Psoas muscle (tissue), 8 donors: ENCODE measurements at regions of chr15 and their contacts with region 1.

Region 1: DNA sequence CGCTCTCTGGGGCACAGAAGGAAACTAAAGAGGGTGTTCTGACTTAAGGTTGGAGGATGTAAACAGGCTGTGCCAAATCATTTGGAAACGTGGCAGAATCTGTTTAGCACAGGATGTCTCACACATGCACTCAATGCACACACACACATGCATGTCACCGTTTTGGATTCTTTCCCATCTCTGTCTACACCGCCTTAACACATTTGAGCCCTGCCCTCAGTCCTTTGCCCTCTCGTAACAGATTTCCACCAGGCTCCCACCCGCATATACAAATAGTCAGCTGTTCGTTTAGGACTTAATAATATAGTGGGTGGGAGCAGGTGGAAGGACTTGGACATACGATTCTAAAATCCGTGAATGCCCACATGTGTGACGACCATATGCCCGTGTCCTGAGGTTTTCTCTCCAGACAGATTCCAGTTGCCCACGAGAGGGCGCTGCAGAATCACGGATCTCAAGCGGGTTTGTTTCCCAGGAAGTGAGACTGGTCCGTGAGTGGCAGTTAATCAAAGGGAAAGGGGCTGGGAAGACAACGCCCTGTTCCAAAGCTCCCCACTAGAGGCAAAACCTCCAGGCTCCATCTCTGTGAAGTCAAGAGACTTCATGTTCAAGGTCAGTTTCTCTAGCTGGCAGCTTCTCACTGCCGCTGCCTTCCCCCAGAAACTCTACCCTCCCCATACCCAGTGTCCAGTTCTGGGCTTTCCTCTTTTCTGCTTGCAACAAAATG is 44.5 kb downstream of the NOX5 start:
- DNase-seq: peak; percentile 88 to 93
- ATAC-seq: peak; percentile 80 to 90 (median 82)
- H3K4me3 ChIP-seq: peak overlapping the region; percentile 33
- H3K27ac ChIP-seq: peak overlapping the region; percentile 11
- H3K4me1 ChIP-seq: peaks cover 8% of the 10 kb centered on the region
- H3K27me3 ChIP-seq: peaks cover 0 to 1% (median 0%) of the 10 kb centered on the region in 3 donors
- CTCF ChIP-seq: peak; percentile 85

Region 2: DNA sequence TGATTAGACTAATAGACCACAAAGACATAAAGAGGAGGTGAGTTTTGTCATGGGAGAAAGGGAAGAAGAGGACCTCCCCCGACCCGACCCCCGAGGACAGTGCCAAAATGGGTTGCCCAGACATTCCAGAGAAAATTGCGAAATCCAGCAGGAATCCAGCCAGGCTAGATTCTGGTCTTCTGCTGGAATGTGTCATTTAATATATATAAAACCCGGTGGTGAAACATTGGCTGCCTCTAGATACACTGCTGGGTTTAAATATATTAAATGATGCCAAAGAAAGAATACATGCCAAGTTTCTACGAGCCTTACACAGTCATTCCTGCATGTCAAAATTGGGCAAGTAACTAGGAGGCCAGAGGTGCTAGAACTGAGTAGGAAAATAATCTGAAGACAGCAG is 173.9 kb before region 1 on chr15:
- intact Hi-C with region 1: no loop called
- DNase-seq: no peak
- ATAC-seq: peak in 2 of 4 donors; percentile 52 to 54
- H3K4me3 ChIP-seq: no peak overlapping the region
- H3K27ac ChIP-seq: no peak overlapping the region
- H3K4me1 ChIP-seq: peaks cover 11% of the 10 kb centered on the region
- H3K27me3 ChIP-seq: no peaks in the 10 kb centered on the region
- CTCF ChIP-seq: no peak

Region 3: DNA sequence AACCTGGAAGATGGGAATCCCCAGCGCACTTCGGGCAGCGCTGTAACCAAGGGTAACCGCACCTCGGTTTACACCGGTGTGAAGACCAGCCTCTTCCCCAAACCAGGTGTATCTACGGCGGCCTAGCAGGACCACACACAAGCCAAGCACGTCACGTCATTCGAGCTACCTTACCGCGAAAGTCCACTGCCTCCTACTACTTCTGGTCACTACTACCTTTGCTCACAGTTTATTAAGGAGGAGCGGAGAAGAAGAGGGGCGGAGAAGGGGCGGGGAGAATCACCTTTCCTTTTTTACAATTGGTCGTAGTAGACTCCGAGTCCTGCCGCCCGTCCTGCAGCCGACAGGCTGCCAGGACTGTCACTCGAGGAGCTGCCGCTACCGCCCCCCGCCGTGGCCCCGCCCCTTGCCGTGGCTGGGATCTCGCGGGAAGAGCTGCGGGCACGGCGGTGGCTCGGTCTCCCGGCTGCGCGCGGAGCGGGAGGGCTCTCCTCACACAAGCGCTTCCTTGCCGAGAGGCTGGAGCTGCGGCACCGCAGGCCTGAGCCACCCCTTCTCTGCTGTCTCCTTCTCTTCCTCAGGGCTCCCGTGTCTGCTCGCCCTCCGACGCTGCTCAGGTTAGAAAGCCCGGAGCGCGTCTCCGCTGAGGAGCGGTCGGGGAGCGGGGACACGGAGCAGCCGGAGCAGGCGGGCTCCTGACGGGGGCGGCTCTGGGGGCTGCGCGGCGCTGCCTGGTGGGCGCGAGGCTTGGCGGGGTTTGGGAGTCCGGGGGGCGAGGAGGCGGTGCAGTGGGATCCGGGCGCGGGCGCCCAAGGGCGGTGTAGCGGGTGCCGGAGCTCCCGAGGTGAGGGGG is 101.4 kb after region 1 on chr15 and contains the start of gene GLCE:
- intact Hi-C with region 1: loop called in 1 of 2 experiments (anchors 5 kb)
- DNase-seq: peak; percentile 96 to 97
- ATAC-seq: peak; percentile 99
- H3K4me3 ChIP-seq: peak within 1 kb of the TSS; percentile 96
- H3K27ac ChIP-seq: peak within 1 kb of the TSS; percentile 76
- H3K4me1 ChIP-seq: peaks cover 10% of the 10 kb centered on the region
- H3K27me3 ChIP-seq: no peaks in the 10 kb centered on the region
- CTCF ChIP-seq: no peak
- total RNA-seq, gene GLCE: 2.5 to 5.2 (median 3.4) TPM

Region 4: DNA sequence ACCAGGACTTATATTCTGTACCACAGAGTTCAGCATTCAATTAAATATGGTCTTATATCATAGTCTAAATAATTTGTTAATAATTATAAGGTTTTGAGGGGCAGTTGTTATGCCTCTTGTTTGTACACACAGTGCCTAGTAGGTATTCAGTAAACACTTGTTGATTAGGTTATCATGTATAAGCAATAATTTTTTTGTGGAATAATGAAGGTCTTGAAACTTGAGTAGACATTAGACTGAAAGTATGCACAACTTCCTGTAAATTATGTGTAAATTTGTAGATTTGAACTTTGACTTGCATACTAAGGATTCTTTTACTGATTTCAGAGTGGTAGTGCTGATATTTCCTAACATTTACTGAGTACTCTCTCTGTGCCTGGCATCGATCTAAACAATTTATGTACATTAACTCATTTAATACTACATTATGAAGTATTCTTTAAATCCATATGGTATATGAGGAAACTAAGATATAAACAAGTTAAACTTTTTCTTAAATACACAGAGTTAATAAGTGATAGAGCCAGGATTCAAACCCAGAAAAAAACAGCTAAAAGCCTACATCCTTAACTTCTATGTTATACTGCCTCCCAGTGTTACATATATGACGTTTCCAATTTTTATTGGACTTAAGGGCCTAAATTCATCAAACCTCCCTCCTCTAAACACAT is 166.5 kb after region 1 on chr15:
- intact Hi-C with region 1: loop called (anchors 1 to 5 kb)
- DNase-seq: no peak
- ATAC-seq: no peak
- H3K4me3 ChIP-seq: no peak overlapping the region
- H3K27ac ChIP-seq: no peak overlapping the region
- H3K4me1 ChIP-seq: no peaks in the 10 kb centered on the region
- H3K27me3 ChIP-seq: no peaks in the 10 kb centered on the region
- CTCF ChIP-seq: peak; percentile 25

Region 5: GRCh38 chr15:69265347-69265955 is 206.5 kb after region 1 on chr15:
- intact Hi-C with region 1: loop called (anchors 1 to 2 kb)
- DNase-seq: no peak
- ATAC-seq: peak in 1 of 4 donors; percentile 56
- H3K4me3 ChIP-seq: no peak overlapping the region
- H3K27ac ChIP-seq: no peak overlapping the region
- H3K4me1 ChIP-seq: no peaks in the 10 kb centered on the region
- H3K27me3 ChIP-seq: no peaks in the 10 kb centered on the region
- CTCF ChIP-seq: peak; percentile 55

Region 6: GRCh38 chr15:69393831-69394491 is 335.0 kb after region 1 on chr15:
- intact Hi-C with region 1: loop called (anchors 1 to 2 kb)
- DNase-seq: no peak
- ATAC-seq: peak in 1 of 4 donors; percentile 23
- H3K4me3 ChIP-seq: no peak overlapping the region
- H3K27ac ChIP-seq: no peak overlapping the region
- H3K4me1 ChIP-seq: peaks cover 7% of the 10 kb centered on the region
- H3K27me3 ChIP-seq: no peaks in the 10 kb centered on the region
- CTCF ChIP-seq: no peak